ENCODE measurements at regions of chr10 and their contacts with region 1.

Region 1: GRCh38 chr10:72215652-72216549 is at the starts of genes ANAPC16 and ASCC1:
- DNase-seq: peak; percentile 93
- H3K4me3 ChIP-seq: peak within 1 kb of the TSS; percentile 47 to 85
- H3K27ac ChIP-seq: peak within 1 kb of the TSS; percentile 88 to 96
- H3K4me1 ChIP-seq: peaks cover 42% of the 10 kb centered on the region
- H3K27me3 ChIP-seq: no peaks in the 10 kb centered on the region
- CTCF ChIP-seq: no peak
- POLR2A ChIP-seq: peak; percentile 52
- total RNA-seq, gene ANAPC16: 43.8 to 47.9 TPM
- total RNA-seq, gene ASCC1: 48.8 to 58.3 TPM

Region 2: DNA sequence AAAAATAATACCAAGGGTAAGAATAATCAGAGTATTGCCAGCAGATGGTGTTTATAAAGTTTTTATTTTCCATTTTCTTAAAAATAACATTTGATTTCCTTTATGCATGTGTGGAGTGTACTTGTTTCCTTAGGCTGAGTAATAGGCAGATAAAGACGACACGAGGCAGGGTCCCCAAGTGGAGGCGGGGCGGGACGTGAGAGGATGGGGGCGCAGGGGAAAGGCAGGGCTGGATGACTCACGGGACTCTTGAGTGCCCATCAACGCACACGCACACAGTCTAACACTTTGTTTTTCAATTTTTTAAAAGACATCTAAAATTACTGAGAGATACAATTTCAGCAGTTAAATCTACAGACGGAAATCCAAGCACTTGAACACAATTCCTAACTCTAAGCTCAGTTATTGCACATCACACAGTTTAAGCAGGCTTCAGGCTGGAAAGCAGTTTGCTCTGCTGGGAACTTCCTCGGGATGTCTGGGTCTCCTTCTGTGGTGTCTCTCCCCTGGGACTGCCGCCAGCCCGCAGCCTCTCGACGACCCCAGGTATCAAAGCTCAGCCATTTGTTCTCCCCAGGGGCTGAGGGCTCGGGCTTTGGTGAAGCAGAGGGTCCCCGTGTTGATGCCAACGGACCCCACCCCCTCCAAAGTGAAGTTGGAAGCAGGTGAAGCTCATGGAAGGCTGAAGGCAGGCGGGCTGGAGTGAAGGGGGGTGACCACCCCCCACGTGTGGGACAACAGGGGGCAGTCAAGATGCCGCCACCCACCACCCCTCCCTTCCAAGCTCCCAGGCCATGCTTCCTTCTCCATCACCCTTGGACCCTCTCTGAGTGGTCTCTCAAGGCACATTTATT is 156.7 kb before region 1 on chr10:
- intact Hi-C with region 1: loop called (anchors 10 kb)
- DNase-seq: no peak
- H3K4me3 ChIP-seq: no peak overlapping the region
- H3K27ac ChIP-seq: no peak overlapping the region
- H3K4me1 ChIP-seq: peaks cover 13% of the 10 kb centered on the region
- H3K27me3 ChIP-seq: no peaks in the 10 kb centered on the region
- CTCF ChIP-seq: no peak
- POLR2A ChIP-seq: no peak

Measured in testis (tissue), 5 donors.